Activated B cell treated with CpG ODN at 0.5 μM for 24 hours (primary cell): ENCODE measurements at regions of chr10 and their contacts with region 1.

Region 1: DNA sequence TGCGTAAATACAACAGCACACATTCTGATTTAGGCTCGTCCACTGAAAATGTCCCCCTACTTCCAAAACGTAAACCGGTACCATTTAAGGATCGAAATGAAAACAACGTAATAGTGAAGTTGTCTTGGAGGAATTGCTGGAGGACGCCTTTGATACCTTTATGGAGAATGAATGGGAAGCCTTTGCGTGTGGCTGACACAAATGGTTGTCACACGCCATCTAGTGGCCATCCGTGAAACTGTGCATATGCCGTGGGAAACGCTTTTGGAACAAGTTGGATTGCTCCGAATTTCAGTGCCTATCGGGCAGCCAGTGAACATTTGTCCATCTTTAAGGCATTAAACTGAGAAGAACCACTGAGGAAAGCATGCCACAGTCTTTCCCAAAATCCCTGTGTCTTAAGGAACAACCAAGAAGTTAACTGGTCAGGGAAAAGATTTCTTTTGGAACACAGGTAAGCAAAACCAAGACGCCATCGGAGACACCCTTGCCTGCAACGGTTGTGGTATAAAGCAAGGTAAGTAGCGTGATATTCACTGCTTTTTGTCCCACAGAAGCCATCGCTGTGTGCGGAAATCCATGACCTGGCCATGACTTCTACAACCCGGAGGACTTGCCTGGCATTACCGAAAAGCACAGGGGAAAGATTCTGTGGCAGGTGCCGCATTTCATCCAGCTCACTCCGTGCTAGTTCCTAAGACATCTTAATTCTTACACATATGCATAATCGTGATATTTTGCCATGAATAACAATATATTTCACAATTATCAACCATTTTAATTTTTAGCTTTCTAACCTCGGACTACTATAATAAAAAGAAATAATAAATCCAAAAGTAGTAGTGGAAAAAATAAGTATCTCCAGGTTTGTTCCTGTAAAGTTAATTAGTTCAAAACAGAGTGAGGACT is 100.6 kb downstream of the FAM204A start:
- DNase-seq: peak; percentile 36
- ATAC-seq: no peak
- H3K4me3 Mint-ChIP-seq: no peak overlapping the region
- H3K27ac Mint-ChIP-seq: no peak overlapping the region
- H3K4me1 Mint-ChIP-seq: no peaks in the 10 kb centered on the region
- H3K27me3 Mint-ChIP-seq: peaks cover 38% of the 10 kb centered on the region
- CTCF ChIP-seq: peak; percentile 99

Region 2: GRCh38 chr10:117442944-117443685 is 798.4 kb before region 1 on chr10:
- CTCF ChIA-PET with region 1: interaction called, 4 read pairs
- POLR2A ChIA-PET with region 1: no interaction called
- intact Hi-C with region 1: loop called (anchors 1 kb)
- DNase-seq: peak; percentile 33
- ATAC-seq: peak; percentile 60
- H3K4me3 Mint-ChIP-seq: peak overlapping the region; percentile 5
- H3K27ac Mint-ChIP-seq: no peak overlapping the region
- H3K4me1 Mint-ChIP-seq: peaks cover 5% of the 10 kb centered on the region
- H3K27me3 Mint-ChIP-seq: peaks cover 16% of the 10 kb centered on the region
- CTCF ChIP-seq: no peak

Region 3: DNA sequence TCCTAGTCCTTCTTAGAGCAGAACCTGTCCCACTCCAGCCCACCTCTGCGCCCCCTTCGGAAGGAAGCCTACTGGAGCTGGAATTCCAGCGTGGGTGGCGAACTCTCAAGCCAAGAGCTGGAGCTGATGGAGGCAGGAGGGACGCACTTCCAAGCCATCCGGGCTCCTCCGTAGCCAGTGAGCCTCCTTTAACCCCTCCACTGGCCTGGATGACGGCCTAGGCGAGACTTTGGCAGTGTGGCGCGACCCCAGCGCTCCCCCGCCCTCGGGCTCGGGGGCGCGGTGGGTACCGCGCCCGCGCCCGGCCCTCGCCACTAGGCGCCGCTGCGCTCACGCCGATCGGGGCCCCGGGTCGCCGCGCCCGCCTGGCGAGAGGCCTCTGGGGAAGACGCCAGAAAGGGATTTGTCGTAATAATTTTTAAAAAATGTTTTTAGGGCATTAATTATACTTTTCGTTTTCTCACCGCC is 704.0 kb before region 1 on chr10:
- CTCF ChIA-PET with region 1: interaction called, 3 read pairs
- POLR2A ChIA-PET with region 1: no interaction called
- intact Hi-C with region 1: loop called (anchors 1 kb)
- DNase-seq: no peak
- ATAC-seq: no peak
- H3K4me3 Mint-ChIP-seq: no peak overlapping the region
- H3K27ac Mint-ChIP-seq: no peak overlapping the region
- H3K4me1 Mint-ChIP-seq: peaks cover 6% of the 10 kb centered on the region
- H3K27me3 Mint-ChIP-seq: peaks cover 51% of the 10 kb centered on the region
- CTCF ChIP-seq: no peak

Region 4: DNA sequence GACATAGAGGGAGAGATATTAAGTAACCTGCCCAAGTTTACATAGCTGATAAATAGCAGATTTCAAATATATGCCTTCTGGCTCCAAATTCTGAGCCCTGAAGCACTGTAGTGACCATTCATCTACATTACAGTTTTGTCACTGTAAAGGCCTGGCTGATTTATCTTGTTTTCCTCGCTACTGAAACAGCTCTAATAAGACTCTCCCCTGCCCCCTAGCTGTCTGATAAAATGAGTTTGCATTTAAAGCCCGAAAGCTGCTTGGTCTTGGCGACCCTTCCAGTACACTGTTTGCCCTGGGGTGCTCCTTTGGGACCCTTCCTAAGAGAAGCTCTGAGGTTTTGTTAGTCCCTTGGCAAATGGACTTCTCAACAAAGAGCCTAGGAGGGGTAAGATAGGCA is 135.1 kb before region 1 on chr10:
- CTCF ChIA-PET with region 1: no interaction called
- POLR2A ChIA-PET with region 1: no interaction called
- intact Hi-C with region 1: no loop called
- DNase-seq: no peak
- ATAC-seq: no peak
- H3K4me3 Mint-ChIP-seq: no peak overlapping the region
- H3K27ac Mint-ChIP-seq: no peak overlapping the region
- H3K4me1 Mint-ChIP-seq: no peaks in the 10 kb centered on the region
- H3K27me3 Mint-ChIP-seq: peaks cover 4% of the 10 kb centered on the region
- CTCF ChIP-seq: no peak